ENCODE measurements at regions of chr1 and their contacts with region 1.

Region 1: GRCh38 chr1:39026051-39026865 is at the start of gene NDUFS5:
- DNase-seq: peak; percentile 85 to 87
- H3K4me3 ChIP-seq: peak within 1 kb of the TSS; percentile 82
- H3K4me3 Mint-ChIP-seq: peak within 1 kb of the TSS; percentile 95
- H3K27ac Mint-ChIP-seq: peak within 1 kb of the TSS; percentile 100
- H3K4me1 ChIP-seq: peaks cover 10% of the 10 kb centered on the region
- H3K4me1 Mint-ChIP-seq: peaks cover 6% of the 10 kb centered on the region
- H3K27me3 ChIP-seq: no peaks in the 10 kb centered on the region
- H3K27me3 Mint-ChIP-seq: no peaks in the 10 kb centered on the region
- CTCF ChIP-seq: no peak
- total RNA-seq, gene NDUFS5: 176 and 192 TPM in 2 replicates

Region 2: GRCh38 chr1:38964140-38964548 is 62.1 kb before region 1 on chr1:
- CTCF ChIA-PET with region 1: interaction called, 3 read pairs
- POLR2A ChIA-PET with region 1: no interaction called
- intact Hi-C with region 1: loop called (anchors 2 kb)
- DNase-seq: peak in 1 of 2 experiments; percentile 10
- H3K4me3 ChIP-seq: no peak overlapping the region
- H3K4me3 Mint-ChIP-seq: no peak overlapping the region
- H3K27ac Mint-ChIP-seq: no peak overlapping the region
- H3K4me1 ChIP-seq: peaks cover 11% of the 10 kb centered on the region
- H3K4me1 Mint-ChIP-seq: peaks cover 18% of the 10 kb centered on the region
- H3K27me3 ChIP-seq: no peaks in the 10 kb centered on the region
- H3K27me3 Mint-ChIP-seq: no peaks in the 10 kb centered on the region
- CTCF ChIP-seq: peak in 1 of 2 experiments; percentile 17

Region 3: GRCh38 chr1:38990738-38991639 is 35.3 kb before region 1 on chr1 and contains the start of gene AKIRIN1:
- CTCF ChIA-PET with region 1: no interaction called
- POLR2A ChIA-PET with region 1: no interaction called
- intact Hi-C with region 1: loop called (anchors 2 kb)
- DNase-seq: peak; percentile 98
- H3K4me3 ChIP-seq: peak within 1 kb of the TSS; percentile 67
- H3K4me3 Mint-ChIP-seq: peak within 1 kb of the TSS; percentile 90
- H3K27ac Mint-ChIP-seq: peak within 1 kb of the TSS; percentile 85
- H3K4me1 ChIP-seq: peaks cover 23% of the 10 kb centered on the region
- H3K4me1 Mint-ChIP-seq: peaks cover 21% of the 10 kb centered on the region
- H3K27me3 ChIP-seq: no peaks in the 10 kb centered on the region
- H3K27me3 Mint-ChIP-seq: no peaks in the 10 kb centered on the region
- CTCF ChIP-seq: no peak
- total RNA-seq, gene AKIRIN1: 59.4 and 68.4 TPM in 2 replicates

Region 4: DNA sequence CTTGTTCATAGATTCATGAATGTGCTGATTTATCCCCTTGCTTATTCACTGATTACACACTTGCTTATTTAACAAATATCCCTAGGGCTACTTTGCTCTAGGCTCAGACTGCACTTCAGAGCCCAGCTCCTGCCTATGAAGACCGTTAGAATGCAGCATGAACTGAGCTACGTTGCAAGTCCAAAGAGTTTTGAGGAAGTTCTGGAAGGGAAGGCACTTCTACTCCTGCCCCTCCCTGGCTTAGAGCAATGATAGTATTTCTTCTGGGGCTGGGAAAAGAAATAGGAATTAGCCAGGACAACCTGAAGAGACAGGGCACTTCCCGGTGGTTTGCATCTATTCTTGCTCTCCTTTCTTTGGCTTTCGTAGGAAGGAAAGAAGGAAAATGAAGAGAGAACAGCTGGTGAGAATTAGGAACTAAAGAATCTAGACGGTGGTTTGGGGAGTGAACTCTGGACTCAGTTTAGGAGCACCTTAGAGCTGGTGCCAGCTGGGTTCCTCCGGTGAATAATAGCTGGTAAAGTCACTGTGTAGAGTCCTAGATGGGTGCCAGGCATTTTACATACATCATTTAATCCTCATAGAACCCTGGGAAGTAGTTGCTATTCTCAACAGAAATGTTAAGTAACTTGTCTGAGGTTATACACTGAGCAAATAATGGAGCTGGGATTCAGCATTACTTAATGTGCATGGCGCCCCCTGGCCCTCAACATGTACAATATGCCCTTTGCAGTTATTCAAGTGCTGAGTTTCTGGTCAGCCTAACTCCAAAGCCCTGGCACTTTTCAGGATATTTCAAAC is 65.8 kb after region 1 on chr1:
- CTCF ChIA-PET with region 1: interaction called, 10 read pairs
- POLR2A ChIA-PET with region 1: no interaction called
- intact Hi-C with region 1: no loop called
- DNase-seq: peak; percentile 59 to 62
- H3K4me3 ChIP-seq: no peak overlapping the region
- H3K4me3 Mint-ChIP-seq: no peak overlapping the region
- H3K27ac Mint-ChIP-seq: no peak overlapping the region
- H3K4me1 ChIP-seq: no peaks in the 10 kb centered on the region
- H3K4me1 Mint-ChIP-seq: no peaks in the 10 kb centered on the region
- H3K27me3 ChIP-seq: no peaks in the 10 kb centered on the region
- H3K27me3 Mint-ChIP-seq: no peaks in the 10 kb centered on the region
- CTCF ChIP-seq: peak; percentile 52 to 54

Region 5: DNA sequence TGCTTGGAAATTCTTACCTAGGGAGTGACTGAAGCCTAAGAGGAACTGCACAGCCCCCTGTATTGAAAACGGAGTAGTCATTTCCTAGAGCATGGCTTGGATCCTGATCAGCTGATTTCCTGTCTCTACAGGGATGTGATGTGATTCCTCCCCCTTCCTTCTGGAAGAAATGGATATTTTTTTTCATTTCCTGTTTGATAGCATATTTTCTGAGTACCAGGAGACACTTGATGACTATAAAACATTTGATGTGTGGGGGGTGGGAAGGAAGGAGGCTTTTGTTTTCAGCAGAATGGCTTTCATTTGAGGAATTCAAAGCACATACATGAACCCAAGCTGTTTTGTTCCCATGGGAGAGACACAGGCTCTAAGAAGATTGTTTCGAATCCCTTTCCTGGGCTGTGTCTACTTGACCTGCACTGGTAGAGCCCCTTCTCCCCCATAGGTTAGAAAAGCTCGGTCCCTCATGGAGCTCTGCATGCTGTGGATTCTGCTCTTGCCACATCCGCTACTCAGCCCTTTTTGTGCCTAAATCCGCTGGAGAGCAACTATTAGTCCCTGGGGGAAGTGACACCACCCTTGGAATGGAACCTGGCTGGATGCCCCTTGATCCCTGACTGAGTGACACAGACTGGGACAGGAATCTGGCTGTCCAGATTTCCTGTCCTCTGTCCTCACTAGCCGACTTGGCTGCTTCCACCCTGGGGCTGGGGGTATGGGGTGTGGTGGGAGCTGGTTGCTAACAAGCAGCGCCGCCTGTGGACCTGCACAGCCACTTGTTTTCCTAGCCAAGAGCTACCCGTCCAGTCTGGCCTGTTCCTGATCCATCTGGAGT is 106.5 kb after region 1 on chr1:
- CTCF ChIA-PET with region 1: no interaction called
- POLR2A ChIA-PET with region 1: no interaction called
- intact Hi-C with region 1: no loop called
- DNase-seq: peak; percentile 88 to 93
- H3K4me3 ChIP-seq: no peak overlapping the region
- H3K4me3 Mint-ChIP-seq: peak overlapping the region; percentile 50
- H3K27ac Mint-ChIP-seq: peak overlapping the region; percentile 77
- H3K4me1 ChIP-seq: peaks cover 22% of the 10 kb centered on the region
- H3K4me1 Mint-ChIP-seq: peaks cover 18% of the 10 kb centered on the region
- H3K27me3 ChIP-seq: no peaks in the 10 kb centered on the region
- H3K27me3 Mint-ChIP-seq: no peaks in the 10 kb centered on the region
- CTCF ChIP-seq: peak in 1 of 2 experiments; percentile 52

Region 6: DNA sequence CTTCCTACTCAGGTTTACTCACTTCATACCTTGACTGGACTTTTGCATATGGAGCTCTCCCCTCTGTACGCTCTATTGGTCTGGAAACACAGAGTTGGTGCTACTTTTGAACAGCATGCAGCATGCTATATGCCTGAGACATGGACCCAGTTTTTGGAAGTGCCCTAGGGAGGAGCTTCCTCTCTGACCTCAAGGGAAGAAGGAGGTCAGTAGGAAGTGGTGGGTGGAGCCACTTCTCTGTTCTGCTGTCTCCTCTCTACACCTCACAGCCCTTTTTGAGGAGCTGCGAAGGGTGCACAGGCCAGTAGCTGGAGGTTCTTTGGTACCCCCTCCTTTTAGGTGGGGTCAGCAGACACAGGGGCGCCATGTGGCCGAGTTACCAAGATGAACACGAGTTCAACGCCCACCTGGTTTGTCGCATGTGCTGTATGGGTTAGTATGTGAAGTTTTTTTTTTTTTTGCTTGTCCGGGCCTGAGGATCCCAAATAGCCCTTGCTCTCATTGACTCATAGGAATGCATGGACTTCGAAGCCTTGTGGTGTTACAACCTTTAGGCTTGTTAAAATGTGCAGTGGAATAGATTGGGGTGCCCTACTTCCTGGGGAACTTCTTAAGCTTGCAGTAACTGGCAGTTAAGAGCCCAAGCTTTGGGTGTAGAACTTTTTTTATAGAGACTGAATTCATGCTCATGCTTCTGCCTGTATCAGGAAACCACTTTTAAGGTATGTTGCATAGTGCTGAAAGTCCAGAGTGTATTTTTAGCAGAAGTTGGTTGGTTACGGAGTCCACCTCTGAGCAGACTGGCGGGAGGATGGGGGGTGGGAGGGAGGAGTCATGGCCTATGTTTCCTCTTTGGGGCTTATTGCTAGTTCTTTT is 189.0 kb after region 1 on chr1:
- CTCF ChIA-PET with region 1: no interaction called
- POLR2A ChIA-PET with region 1: no interaction called
- intact Hi-C with region 1: loop called (anchors 5 kb)
- DNase-seq: peak in 1 of 2 experiments; percentile 41
- H3K4me3 ChIP-seq: peak overlapping the region; percentile 19
- H3K4me3 Mint-ChIP-seq: peak overlapping the region; percentile 61
- H3K27ac Mint-ChIP-seq: peak overlapping the region; percentile 83
- H3K4me1 ChIP-seq: peaks cover 58% of the 10 kb centered on the region
- H3K4me1 Mint-ChIP-seq: peaks cover 23% of the 10 kb centered on the region
- H3K27me3 ChIP-seq: no peaks in the 10 kb centered on the region
- H3K27me3 Mint-ChIP-seq: no peaks in the 10 kb centered on the region
- CTCF ChIP-seq: no peak